Common myeloid progenitor, CD34-positive (primary cell): ENCODE measurements at regions of chr14 and their contacts with region 1.

Region 1: GRCh38 chr14:51828017-51828797 is 32.2 kb upstream of the GNG2 start:
- DNase-seq: peak; percentile 89 to 98 (median 97)
- H3K4me3 ChIP-seq: peak overlapping the region in 1 of 7 experiments; percentile 1
- H3K27ac ChIP-seq: no peak overlapping the region
- H3K4me1 ChIP-seq: peaks cover 5 to 29% (median 21%) of the 10 kb centered on the region in 4 experiments
- H3K27me3 ChIP-seq: no peaks in the 10 kb centered on the region

Region 2: DNA sequence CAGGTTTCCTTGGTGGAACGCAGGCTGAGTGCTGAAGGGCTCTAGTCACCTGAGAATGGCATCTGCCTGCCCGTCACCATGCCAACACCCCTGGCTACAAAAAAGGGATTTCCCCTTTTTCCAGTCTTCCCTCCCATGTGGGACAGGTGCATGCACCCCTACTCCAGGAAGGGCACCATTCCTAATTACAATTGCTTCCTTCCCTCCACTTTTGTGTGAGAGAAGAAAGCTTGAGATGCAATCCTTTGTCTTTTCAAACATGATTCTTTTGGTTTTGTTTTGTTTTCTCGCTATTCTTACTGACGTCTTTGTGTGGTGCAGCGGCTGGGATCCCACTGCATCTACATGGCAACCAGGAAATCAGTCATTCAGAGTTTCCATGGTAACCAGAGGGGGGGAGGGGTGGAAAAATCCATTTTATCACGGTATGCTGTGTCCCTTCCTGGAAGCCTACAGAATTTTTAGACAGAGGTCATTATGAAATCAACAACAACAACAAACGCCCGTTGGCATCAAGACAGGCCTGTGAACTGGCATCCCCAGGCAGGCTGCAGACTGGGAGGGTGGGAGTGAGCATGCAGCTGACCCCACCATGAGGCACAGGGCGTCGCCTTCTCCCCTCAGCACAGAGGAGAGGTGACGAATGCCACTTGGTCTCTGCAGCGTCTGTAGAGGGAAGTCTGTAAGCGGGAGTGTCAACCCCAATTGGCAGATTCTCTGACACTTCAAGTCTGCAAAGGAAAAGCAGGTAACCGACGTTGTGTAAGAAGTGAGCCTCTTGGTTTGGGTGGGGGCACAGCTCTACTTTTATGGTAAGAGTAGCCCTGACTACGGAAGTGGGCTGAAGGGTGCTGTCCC is 18.7 kb after region 1 on chr14:
- CTCF ChIA-PET with region 1: interaction called, 34 read pairs
- POLR2A ChIA-PET with region 1: interaction called, 11 read pairs
- DNase-seq: peak; percentile 97 to 100 (median 99)
- H3K4me3 ChIP-seq: peak overlapping the region in 6 of 7 experiments; percentile 58 to 80 (median 73)
- H3K27ac ChIP-seq: peak overlapping the region; percentile 98 to 99
- H3K4me1 ChIP-seq: peaks cover 28 to 49% (median 33%) of the 10 kb centered on the region in 4 experiments
- H3K27me3 ChIP-seq: no peaks in the 10 kb centered on the region